HCT116 (cell line): ENCODE measurements at regions of chr2 and their contacts with region 1.

Region 1: GRCh38 chr2:221635949-221636348 is 63.8 kb upstream of the EPHA4 start:
- DNase-seq: peak; percentile 26
- ATAC-seq: peak; percentile 93
- H3K4me3 ChIP-seq: no peak overlapping the region
- H3K27ac ChIP-seq: no peak overlapping the region
- H3K4me1 ChIP-seq: no peaks in the 10 kb centered on the region
- H3K27me3 ChIP-seq: no peaks in the 10 kb centered on the region
- CTCF ChIP-seq: peak in 2 of 3 experiments; percentile 44 to 49; a peak in 4 of 6 replicates
- POLR2A ChIP-seq: no peak
- RAD21 ChIP-seq: no peak

Region 2: GRCh38 chr2:221958224-221958623 is 322.3 kb after region 1 on chr2:
- CTCF ChIA-PET with region 1: no interaction called
- POLR2A ChIA-PET with region 1: no interaction called
- RAD21 ChIA-PET with region 1: no interaction called
- intact Hi-C with region 1: loop called (anchors 10 kb)
- DNase-seq: no peak
- ATAC-seq: no peak
- H3K4me3 ChIP-seq: no peak overlapping the region
- H3K27ac ChIP-seq: no peak overlapping the region
- H3K4me1 ChIP-seq: no peaks in the 10 kb centered on the region
- H3K27me3 ChIP-seq: peaks cover 8% of the 10 kb centered on the region; the same call in 1 of the 2 replicates
- CTCF ChIP-seq: 0 out of 6 replicates have a peak, but pooled peaks of 1 of the 3 experiments have one; percentile 7
- POLR2A ChIP-seq: no peak
- RAD21 ChIP-seq: peak; percentile 43

Region 3: DNA sequence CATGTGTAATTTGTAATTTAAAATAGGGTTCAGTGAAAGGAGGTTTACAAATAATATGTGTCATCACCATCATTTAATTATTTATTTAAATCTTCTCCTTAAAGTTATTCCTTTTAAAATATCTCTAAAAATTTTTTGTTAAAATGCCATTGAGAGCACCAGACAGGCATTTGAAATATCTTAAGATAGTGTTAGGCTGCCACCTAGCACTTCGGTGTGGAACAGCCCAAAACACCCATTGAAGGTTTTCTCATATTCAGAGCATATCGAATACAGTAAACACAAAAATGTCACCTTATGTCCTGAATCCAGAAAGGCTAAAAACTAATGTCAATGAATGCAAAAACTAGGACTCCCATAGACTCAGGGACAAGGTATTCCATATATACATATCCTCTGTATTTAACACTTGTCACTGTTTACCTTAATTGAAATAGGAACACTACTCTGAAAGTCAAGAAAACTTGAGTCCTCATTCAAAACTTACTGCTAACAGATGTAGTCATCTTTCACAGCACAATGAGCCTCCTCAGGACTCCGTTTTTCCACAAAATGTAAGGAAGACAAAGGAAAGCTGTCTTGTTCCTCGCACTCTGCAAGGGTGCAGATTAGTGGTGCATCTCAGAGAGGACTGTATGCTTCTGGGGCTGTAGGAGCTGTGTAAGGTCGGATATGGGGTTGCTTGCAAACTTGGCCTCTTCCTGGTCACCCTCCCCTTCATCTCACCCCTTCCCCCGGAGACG is 333.3 kb after region 1 on chr2:
- CTCF ChIA-PET with region 1: no interaction called
- POLR2A ChIA-PET with region 1: no interaction called
- RAD21 ChIA-PET with region 1: no interaction called
- intact Hi-C with region 1: no loop called
- DNase-seq: peak; percentile 13
- ATAC-seq: peak; percentile 93
- H3K4me3 ChIP-seq: no peak overlapping the region
- H3K27ac ChIP-seq: no peak overlapping the region
- H3K4me1 ChIP-seq: no peaks in the 10 kb centered on the region
- H3K27me3 ChIP-seq: peaks cover 23% of the 10 kb centered on the region; the same call in 1 of the 2 replicates
- CTCF ChIP-seq: peak; percentile 47 to 62 (median 55); a peak in 5 of 6 replicates
- POLR2A ChIP-seq: no peak
- RAD21 ChIP-seq: peak; percentile 79